ENCODE measurements at regions of chr11 and their contacts with region 1.

Region 1: DNA sequence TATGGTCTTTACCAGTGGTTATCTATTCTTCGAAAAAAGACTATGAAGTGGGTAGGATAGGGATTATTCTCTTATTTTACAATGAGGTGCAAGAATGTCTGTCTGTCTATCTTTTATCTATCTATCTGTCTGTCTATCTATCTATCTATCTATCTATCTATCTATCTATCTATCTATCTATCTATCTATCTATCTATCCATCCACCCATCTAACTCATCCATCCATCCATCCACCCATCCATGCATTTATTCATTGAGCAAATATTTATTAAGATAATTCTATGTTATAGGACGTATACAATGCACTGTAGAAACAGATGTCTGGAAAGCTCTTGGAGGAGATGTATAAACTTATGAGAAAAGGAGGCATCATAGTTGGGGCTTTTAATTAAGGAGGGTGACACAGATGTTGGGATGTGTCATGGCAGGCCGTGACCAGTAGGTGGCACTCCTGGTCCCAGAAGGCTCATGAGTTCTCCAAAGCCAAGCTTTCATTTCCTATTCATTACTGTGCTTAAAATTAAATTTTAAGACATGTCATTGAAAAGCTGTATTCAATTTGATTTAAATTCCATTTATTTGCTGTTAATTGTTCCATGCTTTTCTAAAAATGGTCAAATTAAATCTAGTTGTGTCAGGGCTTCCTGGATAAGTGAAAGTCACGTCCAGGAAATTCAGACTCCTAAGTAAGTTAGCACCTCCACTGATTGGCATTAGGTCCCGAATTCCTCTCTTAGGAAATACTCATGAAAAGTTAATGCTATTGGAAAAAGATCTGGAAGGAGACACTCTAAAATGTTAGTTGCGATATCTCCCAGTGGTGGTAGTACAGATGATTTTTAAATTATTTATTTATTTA is 19.0 kb upstream of the E2F8 start:
- H3K4me3 ChIP-seq: no peak overlapping the region
- H3K27ac ChIP-seq: no peak overlapping the region
- H3K4me1 ChIP-seq: no peaks in the 10 kb centered on the region
- CTCF ChIP-seq: no peak

Region 2: GRCh38 chr11:18890615-18891014 is 369.1 kb before region 1 on chr11:
- CTCF ChIA-PET with region 1: no interaction called
- POLR2A ChIA-PET with region 1: no interaction called
- H3K4me3 ChIP-seq: no peak overlapping the region
- H3K27ac ChIP-seq: no peak overlapping the region
- H3K4me1 ChIP-seq: no peaks in the 10 kb centered on the region
- CTCF ChIP-seq: no peak

Region 3: GRCh38 chr11:19232910-19233503 is 26.7 kb before region 1 on chr11:
- CTCF ChIA-PET with region 1: no interaction called
- POLR2A ChIA-PET with region 1: no interaction called
- H3K4me3 ChIP-seq: no peak overlapping the region
- H3K27ac ChIP-seq: no peak overlapping the region
- H3K4me1 ChIP-seq: no peaks in the 10 kb centered on the region
- CTCF ChIP-seq: no peak

Region 4: DNA sequence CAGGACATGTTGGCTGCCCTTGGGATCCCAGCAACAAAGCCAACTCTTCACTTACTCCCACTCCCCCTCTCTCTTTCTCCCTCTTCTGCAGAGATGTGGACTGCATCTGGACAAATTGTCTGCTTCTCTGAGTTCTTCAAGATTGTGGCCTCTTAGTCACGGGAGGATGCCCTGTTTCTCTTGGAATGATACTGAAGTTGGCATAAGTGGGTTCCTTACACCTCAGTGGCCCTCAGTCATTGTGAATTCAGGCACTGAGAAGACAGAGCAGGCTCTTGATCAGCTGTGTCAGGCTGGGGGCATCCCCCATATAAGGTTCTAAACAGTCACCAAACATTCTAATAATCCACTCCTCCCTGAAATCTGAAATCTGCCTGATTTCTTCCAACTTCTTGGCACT is 12.9 kb before region 1 on chr11:
- CTCF ChIA-PET with region 1: interaction called, 13 read pairs
- POLR2A ChIA-PET with region 1: no interaction called
- H3K4me3 ChIP-seq: no peak overlapping the region
- H3K27ac ChIP-seq: no peak overlapping the region
- H3K4me1 ChIP-seq: no peaks in the 10 kb centered on the region
- CTCF ChIP-seq: no peak

Region 5: DNA sequence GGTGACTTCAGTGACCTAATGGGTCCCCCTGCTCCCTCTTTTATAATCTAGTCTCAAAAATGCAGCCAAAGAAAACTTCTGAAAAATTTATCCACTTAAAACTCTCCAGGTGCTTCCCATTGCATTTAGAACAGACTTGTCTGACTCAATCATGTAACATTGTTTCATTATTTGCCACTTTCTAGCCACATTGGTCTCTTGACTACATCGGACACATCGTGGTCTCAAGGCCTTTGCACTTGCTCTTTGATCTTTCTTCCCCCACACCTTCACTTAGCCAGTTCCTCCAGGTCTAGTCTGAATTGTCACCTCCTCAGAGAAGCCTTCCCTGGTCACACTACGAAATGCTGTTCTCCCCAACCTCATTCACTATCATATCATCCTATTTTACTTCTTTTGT is 78.1 kb after region 1 on chr11:
- CTCF ChIA-PET with region 1: no interaction called
- POLR2A ChIA-PET with region 1: no interaction called
- H3K4me3 ChIP-seq: no peak overlapping the region
- H3K27ac ChIP-seq: no peak overlapping the region
- H3K4me1 ChIP-seq: no peaks in the 10 kb centered on the region
- CTCF ChIP-seq: no peak

Measured in HEK293 (cell line).